Ovary (tissue), 10 donors: ENCODE measurements at regions of chr7 and their contacts with region 1.

Region 1: GRCh38 chr7:95684037-95684436 is 87.7 kb upstream of the PDK4 start:
- DNase-seq: no peak
- H3K4me3 ChIP-seq: no peak overlapping the region
- H3K27ac ChIP-seq: no peak overlapping the region
- H3K4me1 ChIP-seq: peaks cover 2% of the 10 kb centered on the region
- H3K27me3 ChIP-seq: no peaks in the 10 kb centered on the region
- CTCF ChIP-seq: peak; percentile 38 to 83 (median 55)
- EP300 ChIP-seq: no peak
- POLR2A ChIP-seq: no peak

Region 2: DNA sequence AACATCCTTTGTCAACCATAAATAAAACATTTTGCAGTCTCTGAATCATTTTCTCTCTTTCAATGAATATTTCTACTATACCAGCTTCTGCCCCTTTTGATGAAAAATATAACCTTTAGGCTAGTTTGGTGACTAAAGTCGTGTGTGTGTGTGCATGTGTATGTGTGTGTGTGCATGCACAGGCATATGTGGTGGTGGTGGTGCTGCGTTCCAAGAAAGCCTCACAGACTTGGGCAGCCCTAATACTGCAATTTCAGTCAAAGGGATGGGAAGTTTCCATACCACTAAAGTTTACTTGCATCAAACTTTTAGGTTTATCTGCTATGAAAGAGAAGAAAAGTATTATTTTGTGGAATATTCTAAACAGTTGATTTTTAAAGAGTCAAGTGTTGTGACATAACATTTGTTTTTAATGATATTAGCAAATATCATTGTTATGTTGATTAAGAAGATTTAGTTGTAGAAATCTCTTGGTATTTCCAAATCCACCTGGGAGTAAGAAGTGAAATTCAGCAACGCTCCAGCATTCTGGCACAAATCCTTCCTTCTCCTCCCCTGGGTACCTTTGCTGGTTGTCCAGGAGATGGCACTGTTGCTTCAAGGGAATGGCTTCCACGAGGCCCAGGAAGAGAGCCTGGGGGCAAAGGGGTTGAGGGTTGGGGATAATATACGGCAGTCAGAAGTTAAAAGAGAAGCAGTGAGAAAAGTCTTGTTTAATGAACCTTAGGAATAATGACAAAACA is 156.8 kb before region 1 on chr7:
- intact Hi-C with region 1: loop called (anchors 2 to 5 kb)
- DNase-seq: peak in 4 of 5 donors; percentile 54 to 70 (median 58)
- H3K4me3 ChIP-seq: no peak overlapping the region
- H3K27ac ChIP-seq: no peak overlapping the region
- H3K4me1 ChIP-seq: no peaks in the 10 kb centered on the region
- H3K27me3 ChIP-seq: no peaks in the 10 kb centered on the region
- CTCF ChIP-seq: peak; percentile 68 to 85 (median 83)
- EP300 ChIP-seq: no peak
- POLR2A ChIP-seq: no peak

Region 3: DNA sequence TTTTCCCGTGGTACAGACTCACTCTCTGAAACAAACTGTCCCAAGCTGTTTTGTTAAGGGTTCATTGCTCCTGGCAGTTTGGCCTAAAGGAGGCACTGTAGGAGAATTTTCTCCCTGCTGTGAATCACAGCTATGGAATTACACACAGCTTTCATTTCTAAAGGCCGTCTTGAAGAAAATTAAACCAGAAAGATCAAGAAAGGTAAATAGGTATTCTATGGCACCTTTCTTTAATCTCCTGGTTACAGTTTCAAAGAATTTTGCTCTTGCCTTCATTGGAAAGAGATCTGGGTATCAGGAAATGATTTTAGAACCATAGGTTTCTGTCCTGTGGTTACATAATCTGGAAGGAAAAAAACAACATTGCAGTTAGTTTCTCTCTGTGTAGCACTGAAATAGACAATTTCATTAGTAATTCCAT is 138.9 kb before region 1 on chr7:
- intact Hi-C with region 1: loop called in 3 of 4 experiments (anchors 5 kb)
- DNase-seq: peak in 4 of 5 donors; percentile 41 to 76 (median 46)
- H3K4me3 ChIP-seq: peak overlapping the region; percentile 29
- H3K27ac ChIP-seq: peak overlapping the region in 1 of 2 donors; percentile 72
- H3K4me1 ChIP-seq: peaks cover 11% of the 10 kb centered on the region
- H3K27me3 ChIP-seq: no peaks in the 10 kb centered on the region
- CTCF ChIP-seq: peak; percentile 57 to 83 (median 81)
- EP300 ChIP-seq: no peak
- POLR2A ChIP-seq: no peak

Region 4: GRCh38 chr7:95590387-95591248 is 93.4 kb before region 1 on chr7:
- intact Hi-C with region 1: loop called in 2 of 4 experiments (anchors 5 to 10 kb)
- DNase-seq: no peak
- H3K4me3 ChIP-seq: peak overlapping the region; percentile 74
- H3K27ac ChIP-seq: peak overlapping the region; percentile 3 to 68
- H3K4me1 ChIP-seq: peaks cover 6% of the 10 kb centered on the region
- H3K27me3 ChIP-seq: no peaks in the 10 kb centered on the region
- CTCF ChIP-seq: no peak
- EP300 ChIP-seq: no peak
- POLR2A ChIP-seq: no peak